ENCODE measurements at regions of chr2 and their contacts with region 1.

Region 1: DNA sequence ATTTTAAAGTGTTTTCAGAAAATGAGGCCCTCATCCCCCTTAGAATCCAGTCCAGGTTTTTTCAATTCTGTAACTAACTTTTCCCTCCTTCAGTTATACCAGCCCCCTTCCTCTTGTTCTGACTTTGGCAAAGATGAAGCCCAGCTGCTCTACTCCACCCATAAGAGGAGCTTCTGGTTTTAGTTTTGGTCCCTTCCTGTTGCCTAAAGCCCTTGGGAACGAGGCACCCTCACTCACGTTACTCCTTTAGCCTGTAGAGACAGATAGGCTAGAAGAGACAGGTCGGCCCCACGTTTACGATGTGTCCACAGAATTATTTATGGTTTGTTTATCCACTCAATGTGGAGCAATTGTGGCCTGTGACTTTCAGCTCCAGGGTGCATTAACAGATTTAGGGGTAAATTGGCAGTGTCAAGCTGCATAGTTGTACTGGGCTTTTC is 454.2 kb upstream of the TNP1 start:
- DNase-seq: peak; percentile 63 to 67
- H3K4me3 ChIP-seq: no peak overlapping the region
- H3K4me3 Mint-ChIP-seq: no peak overlapping the region
- H3K27ac Mint-ChIP-seq: peak overlapping the region; percentile 42
- H3K4me1 ChIP-seq: peaks cover 14% of the 10 kb centered on the region; the same call in 1 of the 2 replicates
- H3K4me1 Mint-ChIP-seq: peaks cover 14% of the 10 kb centered on the region
- H3K27me3 ChIP-seq: no peaks in the 10 kb centered on the region
- H3K27me3 Mint-ChIP-seq: no peaks in the 10 kb centered on the region
- CTCF ChIP-seq: no peak

Region 2: DNA sequence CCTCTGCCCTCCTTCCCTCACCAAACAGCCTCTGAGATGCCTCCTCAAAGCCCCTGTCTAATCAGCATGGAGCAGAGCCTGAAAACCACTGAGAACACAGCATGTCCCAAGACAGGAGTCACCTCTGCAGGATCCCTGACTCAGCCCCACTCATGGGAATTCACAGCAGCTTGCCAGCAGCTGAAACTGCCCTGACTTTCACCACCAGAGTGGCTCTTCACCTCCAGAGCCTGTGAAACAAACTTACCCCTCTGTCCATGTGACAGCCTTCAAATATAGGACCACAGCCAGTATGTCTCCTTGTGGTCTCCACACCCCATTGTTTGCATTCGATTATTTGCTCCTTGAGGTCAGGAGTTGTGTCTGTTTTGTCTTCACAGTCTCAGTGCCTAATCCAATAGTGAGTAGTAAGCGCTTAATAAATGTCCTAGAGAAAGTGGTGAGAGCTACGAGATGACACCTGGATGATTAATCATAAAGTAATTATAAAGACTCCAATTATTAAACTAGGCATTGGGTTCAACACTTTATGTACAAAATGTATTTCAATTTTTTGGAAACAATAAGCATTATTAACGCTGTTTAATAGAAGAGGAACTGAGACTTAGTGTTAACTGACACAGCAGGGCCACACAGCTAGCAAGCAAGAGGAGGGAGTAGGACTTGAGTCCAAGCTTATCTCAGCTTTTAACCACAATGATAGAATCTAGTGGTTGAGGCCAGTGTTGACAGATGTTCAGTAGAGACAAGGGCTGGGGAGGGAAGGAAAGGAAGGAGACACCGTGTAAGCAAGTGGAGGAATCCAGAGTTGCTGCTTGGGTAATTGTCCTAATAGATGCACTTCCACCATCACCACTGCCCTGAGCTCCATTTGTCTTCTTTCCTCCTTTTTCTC is 95.5 kb before region 1 on chr2:
- CTCF ChIA-PET with region 1: no interaction called
- POLR2A ChIA-PET with region 1: no interaction called
- intact Hi-C with region 1: no loop called
- DNase-seq: no peak
- H3K4me3 ChIP-seq: no peak overlapping the region
- H3K4me3 Mint-ChIP-seq: no peak overlapping the region
- H3K27ac Mint-ChIP-seq: no peak overlapping the region
- H3K4me1 ChIP-seq: no peaks in the 10 kb centered on the region; the same call in 1 of the 2 replicates
- H3K4me1 Mint-ChIP-seq: no peaks in the 10 kb centered on the region
- H3K27me3 ChIP-seq: no peaks in the 10 kb centered on the region
- H3K27me3 Mint-ChIP-seq: peaks cover 7% of the 10 kb centered on the region
- CTCF ChIP-seq: no peak

Region 3: DNA sequence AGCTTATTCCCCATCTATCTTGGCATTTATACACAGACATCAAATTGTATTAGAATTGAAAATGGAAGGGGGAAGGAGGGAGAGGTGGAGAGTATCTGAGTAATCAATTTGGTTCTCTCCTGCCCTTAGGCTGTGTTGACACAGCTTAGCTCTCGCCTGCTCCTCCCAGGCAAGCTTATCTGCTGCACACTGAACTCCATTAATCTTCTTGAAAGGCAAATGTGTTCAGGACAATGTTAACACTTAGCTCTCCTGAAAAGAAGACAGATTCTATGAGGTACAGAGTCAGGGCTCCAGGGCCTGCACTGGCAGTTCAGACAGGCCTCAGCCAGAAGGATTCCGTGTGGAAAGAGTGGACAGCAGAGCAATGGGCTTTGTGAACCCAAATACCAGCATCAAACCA is 24.2 kb before region 1 on chr2:
- CTCF ChIA-PET with region 1: no interaction called
- POLR2A ChIA-PET with region 1: interaction called, 4 read pairs
- intact Hi-C with region 1: loop called (anchors 1 kb)
- DNase-seq: peak; percentile 77 to 86
- H3K4me3 ChIP-seq: no peak overlapping the region
- H3K4me3 Mint-ChIP-seq: peak overlapping the region; percentile 48
- H3K27ac Mint-ChIP-seq: peak overlapping the region; percentile 86
- H3K4me1 ChIP-seq: peaks cover 35% of the 10 kb centered on the region
- H3K4me1 Mint-ChIP-seq: peaks cover 36% of the 10 kb centered on the region
- H3K27me3 ChIP-seq: no peaks in the 10 kb centered on the region
- H3K27me3 Mint-ChIP-seq: no peaks in the 10 kb centered on the region
- CTCF ChIP-seq: no peak

Region 4: DNA sequence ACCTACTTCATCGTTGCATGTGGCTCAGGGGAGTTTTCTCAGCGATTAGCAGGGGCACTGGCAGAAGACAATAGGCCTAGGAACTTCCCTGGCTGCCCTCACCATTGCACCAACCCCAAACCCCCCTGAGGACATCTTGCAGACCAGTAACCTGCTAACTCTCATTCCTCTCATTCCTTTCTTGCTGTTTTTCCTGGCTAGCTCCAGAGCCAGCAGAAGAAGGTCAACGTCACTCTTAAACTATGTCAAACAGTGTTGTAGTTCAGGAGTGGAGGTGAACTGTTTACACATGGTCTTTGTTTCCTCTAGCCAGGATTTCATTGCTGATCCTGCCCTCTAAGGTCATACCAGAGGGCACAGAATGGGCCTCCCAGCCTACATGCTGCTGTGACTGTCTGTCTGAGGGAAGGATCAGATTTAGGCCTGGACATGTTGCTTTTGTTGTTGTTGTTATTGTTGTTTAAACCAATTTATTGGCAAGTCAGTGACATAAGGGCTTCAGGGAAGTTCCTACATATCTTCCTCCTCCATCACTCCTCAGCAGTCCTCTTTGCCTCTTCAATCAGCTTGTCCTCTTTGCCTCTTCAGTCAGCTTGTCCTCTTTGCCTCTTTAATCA is 17.6 kb after region 1 on chr2:
- CTCF ChIA-PET with region 1: no interaction called
- POLR2A ChIA-PET with region 1: no interaction called
- intact Hi-C with region 1: loop called (anchors 1 kb)
- DNase-seq: peak; percentile 85 to 88
- H3K4me3 ChIP-seq: no peak overlapping the region
- H3K4me3 Mint-ChIP-seq: peak overlapping the region; percentile 12
- H3K27ac Mint-ChIP-seq: peak overlapping the region; percentile 78
- H3K4me1 ChIP-seq: peaks cover 25% of the 10 kb centered on the region
- H3K4me1 Mint-ChIP-seq: peaks cover 35% of the 10 kb centered on the region
- H3K27me3 ChIP-seq: no peaks in the 10 kb centered on the region
- H3K27me3 Mint-ChIP-seq: no peaks in the 10 kb centered on the region
- CTCF ChIP-seq: no peak

Region 5: DNA sequence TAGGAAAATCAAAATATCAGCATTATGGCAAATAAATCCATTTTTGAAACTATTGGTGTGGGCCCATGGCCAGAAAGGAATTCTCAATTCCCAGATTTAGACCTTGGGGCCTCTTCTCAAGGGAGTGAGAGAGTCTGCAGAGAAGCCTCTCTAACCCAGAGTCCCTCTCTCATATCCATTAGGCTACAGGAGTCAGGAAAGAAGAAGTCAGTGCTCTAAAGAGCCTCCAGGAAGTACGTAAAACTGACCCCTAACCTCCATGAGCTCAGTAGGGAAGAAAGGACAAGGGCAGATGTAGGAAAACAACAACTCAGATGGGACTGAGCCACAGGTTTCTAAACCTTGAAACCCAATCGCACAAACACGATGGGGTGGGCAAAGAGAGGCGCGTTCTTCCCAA is 25.7 kb after region 1 on chr2:
- CTCF ChIA-PET with region 1: no interaction called
- POLR2A ChIA-PET with region 1: no interaction called
- intact Hi-C with region 1: loop called (anchors 1 kb)
- DNase-seq: no peak
- H3K4me3 ChIP-seq: no peak overlapping the region
- H3K4me3 Mint-ChIP-seq: no peak overlapping the region
- H3K27ac Mint-ChIP-seq: no peak overlapping the region
- H3K4me1 ChIP-seq: peaks cover 13% of the 10 kb centered on the region; the same call in 1 of the 2 replicates
- H3K4me1 Mint-ChIP-seq: peaks cover 18% of the 10 kb centered on the region
- H3K27me3 ChIP-seq: no peaks in the 10 kb centered on the region
- H3K27me3 Mint-ChIP-seq: no peaks in the 10 kb centered on the region
- CTCF ChIP-seq: no peak

Region 6: GRCh38 chr2:217382794-217383193 is 68.8 kb after region 1 on chr2:
- CTCF ChIA-PET with region 1: no interaction called
- POLR2A ChIA-PET with region 1: no interaction called
- intact Hi-C with region 1: no loop called
- DNase-seq: no peak
- H3K4me3 ChIP-seq: no peak overlapping the region
- H3K4me3 Mint-ChIP-seq: no peak overlapping the region
- H3K27ac Mint-ChIP-seq: no peak overlapping the region
- H3K4me1 ChIP-seq: no peaks in the 10 kb centered on the region
- H3K4me1 Mint-ChIP-seq: no peaks in the 10 kb centered on the region
- H3K27me3 ChIP-seq: no peaks in the 10 kb centered on the region; the same call in 1 of the 2 replicates
- H3K27me3 Mint-ChIP-seq: peaks cover 13% of the 10 kb centered on the region
- CTCF ChIP-seq: no peak

Region 7: GRCh38 chr2:217402761-217403383 is 88.8 kb after region 1 on chr2:
- CTCF ChIA-PET with region 1: no interaction called
- POLR2A ChIA-PET with region 1: no interaction called
- intact Hi-C with region 1: no loop called
- DNase-seq: no peak
- H3K4me3 ChIP-seq: no peak overlapping the region
- H3K4me3 Mint-ChIP-seq: no peak overlapping the region
- H3K27ac Mint-ChIP-seq: no peak overlapping the region
- H3K4me1 ChIP-seq: no peaks in the 10 kb centered on the region
- H3K4me1 Mint-ChIP-seq: no peaks in the 10 kb centered on the region
- H3K27me3 ChIP-seq: no peaks in the 10 kb centered on the region; the same call in 1 of the 2 replicates
- H3K27me3 Mint-ChIP-seq: peaks cover 6% of the 10 kb centered on the region
- CTCF ChIP-seq: no peak

Region 8: GRCh38 chr2:217438821-217439220 is 124.8 kb after region 1 on chr2:
- CTCF ChIA-PET with region 1: no interaction called
- POLR2A ChIA-PET with region 1: no interaction called
- intact Hi-C with region 1: loop called (anchors 1 kb)
- DNase-seq: no peak
- H3K4me3 ChIP-seq: no peak overlapping the region
- H3K4me3 Mint-ChIP-seq: no peak overlapping the region
- H3K27ac Mint-ChIP-seq: no peak overlapping the region
- H3K4me1 ChIP-seq: peaks cover 6% of the 10 kb centered on the region
- H3K4me1 Mint-ChIP-seq: peaks cover 19% of the 10 kb centered on the region
- H3K27me3 ChIP-seq: no peaks in the 10 kb centered on the region
- H3K27me3 Mint-ChIP-seq: no peaks in the 10 kb centered on the region
- CTCF ChIP-seq: no peak